Adrenal gland (tissue), 19 donors: ENCODE measurements at regions of chr9 and their contacts with region 1.

Region 1: DNA sequence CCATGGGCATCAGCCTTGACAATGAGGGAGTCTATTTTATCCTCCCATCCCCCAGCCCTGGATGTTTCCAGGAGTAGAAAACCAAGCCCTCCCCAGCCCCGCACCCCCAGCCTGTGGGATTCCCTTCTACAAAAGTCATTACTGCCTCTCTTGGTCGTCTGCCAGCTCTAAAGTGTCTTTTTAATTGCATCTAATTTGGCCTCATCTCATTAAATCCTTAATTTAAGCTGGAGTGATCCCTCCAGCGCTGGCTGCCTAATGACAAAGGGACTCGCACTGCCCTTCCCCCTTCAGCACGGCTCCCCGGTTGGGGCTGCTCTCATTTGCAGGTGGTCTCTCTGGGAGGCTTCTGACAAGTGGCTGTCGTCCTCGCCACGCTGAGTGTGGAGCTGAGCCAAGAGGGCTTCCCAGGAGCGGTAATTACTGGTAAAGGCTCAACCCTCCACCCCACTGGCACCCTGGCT is 107.9 kb upstream of the ALDH1B1 start:
- DNase-seq: no peak
- H3K4me3 ChIP-seq: no peak overlapping the region
- H3K27ac ChIP-seq: no peak overlapping the region
- H3K4me1 ChIP-seq: no peaks in the 10 kb centered on the region
- H3K27me3 ChIP-seq: no peaks in the 10 kb centered on the region
- CTCF ChIP-seq: no peak
- POLR2A ChIP-seq: no peak

Region 2: DNA sequence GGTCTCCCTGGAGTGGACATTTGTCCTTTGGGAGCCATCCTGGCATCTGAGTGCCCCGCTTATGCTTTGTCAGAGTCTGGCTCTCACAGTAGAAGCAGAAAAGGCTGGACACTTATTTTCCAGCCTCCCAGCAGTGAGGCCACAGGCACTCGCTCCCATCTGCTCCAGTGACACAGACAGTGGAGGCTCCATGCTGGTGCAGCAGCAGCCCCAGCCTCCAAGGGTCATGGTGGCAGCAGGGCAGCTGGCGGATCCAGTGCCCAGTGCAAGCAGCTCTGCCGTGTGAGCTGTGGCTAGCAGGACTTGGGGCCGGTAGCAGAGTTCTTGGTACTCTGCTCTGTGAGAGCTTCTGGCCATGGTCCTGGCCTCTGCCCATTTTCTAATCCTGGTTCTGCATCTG is 49.4 kb before region 1 on chr9:
- intact Hi-C with region 1: loop called in 1 of 2 experiments (anchors 5 kb)
- DNase-seq: peak in 1 of 7 donors; percentile 35
- H3K4me3 ChIP-seq: no peak overlapping the region
- H3K27ac ChIP-seq: no peak overlapping the region
- H3K4me1 ChIP-seq: no peaks in the 10 kb centered on the region
- H3K27me3 ChIP-seq: no peaks in the 10 kb centered on the region
- CTCF ChIP-seq: no peak
- POLR2A ChIP-seq: no peak